HepG2 (cell line): ENCODE measurements at regions of chr1 and their contacts with region 1.

Region 1: GRCh38 chr1:7646981-7647901 is 123.9 kb upstream of the VAMP3 start:
- DNase-seq: no peak
- ATAC-seq: peak; percentile 68
- H3K4me3 ChIP-seq: no peak overlapping the region
- H3K27ac ChIP-seq: no peak overlapping the region
- H3K4me1 ChIP-seq: 0 out of 2 replicates have a peak, but pooled peaks cover 5% of the 10 kb centered on the region
- H3K27me3 ChIP-seq: peaks cover 4 to 28% of the 10 kb centered on the region in 2 experiments; a peak in 4 of 5 replicates
- CTCF ChIP-seq: peak; percentile 88
- EP300 ChIP-seq: no peak
- POLR2A ChIP-seq: no peak
- RAD21 ChIP-seq: peak; percentile 88

Region 2: DNA sequence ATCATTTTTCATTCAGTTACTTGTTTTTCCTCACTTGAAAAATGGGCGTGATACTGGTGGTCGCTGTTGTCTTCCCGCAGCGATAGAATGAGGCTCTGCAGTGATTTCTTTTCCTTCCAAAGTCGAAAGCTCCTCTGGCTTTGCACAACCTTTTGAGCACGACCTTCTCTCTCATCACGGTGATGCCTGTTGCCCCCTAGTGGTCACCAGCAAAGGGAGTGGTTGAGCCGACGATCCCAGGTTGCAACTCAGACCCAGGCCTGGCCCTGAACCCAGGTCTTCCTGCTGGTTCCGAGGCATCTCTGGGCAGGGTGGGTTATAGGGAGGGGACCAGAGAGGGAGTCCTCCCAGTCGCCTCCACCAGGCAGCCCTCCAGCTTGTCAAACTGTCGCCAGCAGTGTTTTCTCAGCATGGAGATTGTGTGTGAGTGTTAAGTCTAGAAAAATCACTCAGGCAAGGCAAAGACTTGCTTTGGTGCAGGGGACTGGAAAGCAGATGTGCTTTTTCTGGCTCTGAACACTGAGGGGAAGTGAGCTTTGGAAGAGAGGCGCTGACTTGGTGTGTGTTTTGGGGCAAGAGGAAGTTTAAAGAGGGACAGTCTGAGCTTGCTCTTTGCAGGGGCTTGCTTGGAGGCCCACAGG is 576.7 kb before region 1 on chr1:
- CTCF ChIA-PET with region 1: no interaction called
- POLR2A ChIA-PET with region 1: no interaction called
- in situ Hi-C with region 1: loop called (anchors 25 kb)
- intact Hi-C with region 1: no loop called
- DNase-seq: peak; percentile 43
- ATAC-seq: peak; percentile 92
- H3K4me3 ChIP-seq: no peak overlapping the region
- H3K27ac ChIP-seq: no peak overlapping the region
- H3K4me1 ChIP-seq: no peaks in the 10 kb centered on the region
- H3K27me3 ChIP-seq: peaks cover 2 to 14% of the 10 kb centered on the region in 2 experiments; a peak in 2 of 5 replicates
- CTCF ChIP-seq: peak; percentile 87
- EP300 ChIP-seq: no peak
- POLR2A ChIP-seq: no peak
- RAD21 ChIP-seq: peak; percentile 56

Region 3: GRCh38 chr1:7229696-7230631 is 417.3 kb before region 1 on chr1:
- CTCF ChIA-PET with region 1: no interaction called
- POLR2A ChIA-PET with region 1: no interaction called
- in situ Hi-C with region 1: loop called (anchors 10 kb)
- intact Hi-C with region 1: no loop called
- DNase-seq: no peak
- ATAC-seq: no peak
- H3K4me3 ChIP-seq: no peak overlapping the region
- H3K27ac ChIP-seq: no peak overlapping the region
- H3K4me1 ChIP-seq: no peaks in the 10 kb centered on the region
- H3K27me3 ChIP-seq: peaks cover 3 to 36% of the 10 kb centered on the region in 2 experiments; a peak in 2 of 5 replicates
- CTCF ChIP-seq: no peak
- EP300 ChIP-seq: no peak
- POLR2A ChIP-seq: no peak
- RAD21 ChIP-seq: no peak

Region 4: DNA sequence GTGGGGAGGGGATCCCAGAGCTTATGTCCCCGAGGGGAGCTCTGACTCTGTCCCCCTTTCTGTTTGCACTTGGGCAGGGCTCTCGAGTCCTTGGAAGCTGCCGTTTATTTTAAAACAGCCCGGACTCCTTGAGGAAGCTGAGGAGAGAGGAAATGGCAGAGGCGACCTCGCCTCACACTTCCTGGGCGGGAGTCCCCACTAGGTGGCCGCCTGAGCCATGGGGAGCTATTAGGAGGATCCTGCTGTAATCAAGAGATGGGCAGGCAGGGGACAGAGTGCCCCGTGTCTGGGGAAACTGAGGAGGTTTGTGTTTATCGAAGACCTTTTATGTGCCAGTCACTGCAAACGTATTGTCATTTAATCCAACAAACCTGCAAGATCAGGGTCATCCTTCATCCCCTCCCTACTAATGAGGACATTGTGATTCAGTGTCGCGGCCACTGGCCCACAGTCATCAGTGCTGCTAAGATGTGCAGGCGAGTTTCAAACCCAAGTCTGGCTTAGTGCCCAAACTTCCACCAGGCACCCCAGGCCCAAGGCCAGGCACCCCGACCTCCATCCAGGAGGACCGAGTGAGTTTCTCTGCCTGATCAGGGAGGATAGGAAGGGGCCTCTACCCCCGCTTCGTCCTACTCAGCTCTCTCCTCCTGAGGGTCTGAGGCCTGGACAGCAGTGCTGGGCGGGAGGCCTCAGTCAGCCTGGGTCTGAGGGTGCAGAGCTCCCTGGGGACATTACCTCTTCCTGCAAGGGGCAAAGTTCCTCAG is 193.0 kb before region 1 on chr1:
- CTCF ChIA-PET with region 1: interaction called, 6 read pairs
- POLR2A ChIA-PET with region 1: no interaction called
- in situ Hi-C with region 1: loop called (anchors 5 kb)
- intact Hi-C with region 1: no loop called
- DNase-seq: no peak
- ATAC-seq: peak; percentile 61; the same call in 2 of the 3 replicates
- H3K4me3 ChIP-seq: no peak overlapping the region
- H3K27ac ChIP-seq: no peak overlapping the region
- H3K4me1 ChIP-seq: no peaks in the 10 kb centered on the region
- H3K27me3 ChIP-seq: peaks cover 3 to 45% of the 10 kb centered on the region in 2 experiments; a peak in 4 of 5 replicates
- CTCF ChIP-seq: peak; percentile 42; the same call in 1 of the 2 replicates
- EP300 ChIP-seq: no peak
- POLR2A ChIP-seq: no peak
- RAD21 ChIP-seq: no peak

Region 5: DNA sequence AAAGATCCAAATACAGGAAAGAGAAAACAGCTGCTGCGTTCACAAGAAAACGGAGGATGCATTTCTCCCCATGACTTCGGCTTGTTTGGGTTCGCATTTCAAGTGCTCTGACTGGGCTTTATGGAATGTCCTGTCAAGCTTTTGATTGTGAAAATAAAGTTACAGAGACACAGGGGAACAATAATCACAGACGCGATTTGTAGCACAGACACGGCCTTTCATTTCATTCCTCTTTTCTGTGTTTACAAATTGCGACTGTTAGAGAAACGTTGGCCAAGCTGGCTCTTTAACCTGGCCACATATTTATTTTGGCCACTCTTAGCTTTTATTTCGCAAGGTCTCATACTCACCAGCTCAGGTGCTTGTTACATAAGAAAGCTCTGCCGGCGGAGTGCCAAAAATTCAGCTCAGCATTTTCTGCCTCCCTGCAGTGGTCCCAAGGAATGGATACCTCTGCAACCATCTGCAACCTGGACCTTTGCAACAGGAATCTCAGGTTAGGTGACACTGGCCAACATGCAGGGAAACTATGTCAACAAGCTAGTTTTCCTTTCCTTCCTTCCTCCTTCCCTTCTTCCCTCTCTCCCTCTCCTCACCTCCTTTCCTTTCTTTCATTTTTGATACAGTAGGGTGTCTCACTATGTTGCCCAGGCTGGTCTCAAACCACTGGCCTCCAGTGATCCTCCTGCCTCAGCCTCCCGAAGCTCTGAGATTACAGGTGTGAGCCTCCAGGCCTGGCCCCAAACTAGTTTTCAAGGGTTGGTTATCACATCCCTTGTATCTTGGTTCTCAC is 612.5 kb after region 1 on chr1:
- CTCF ChIA-PET with region 1: no interaction called
- POLR2A ChIA-PET with region 1: no interaction called
- in situ Hi-C with region 1: no loop called
- intact Hi-C with region 1: no loop called
- DNase-seq: peak; percentile 89
- ATAC-seq: peak; percentile 69
- H3K4me3 ChIP-seq: peak overlapping the region; percentile 31 to 53 (median 32)
- H3K27ac ChIP-seq: peak overlapping the region; percentile 91
- H3K4me1 ChIP-seq: peaks cover 74% of the 10 kb centered on the region
- H3K27me3 ChIP-seq: no peaks in the 10 kb centered on the region
- CTCF ChIP-seq: no peak
- EP300 ChIP-seq: peak; percentile 24 to 89; a peak in 3 of 4 replicates
- POLR2A ChIP-seq: no peak
- RAD21 ChIP-seq: no peak